Right lobe of liver (tissue), 6 donors: ENCODE measurements at regions of chr6 and their contacts with region 1.

Region 1: GRCh38 chr6:41591859-41592502 is 45.8 kb downstream of the FOXP4 start:
- DNase-seq: peak in 2 of 3 donors; percentile 54 to 73
- ATAC-seq: peak; percentile 79 to 90 (median 86)
- H3K4me3 ChIP-seq: no peak overlapping the region
- H3K27ac ChIP-seq: no peak overlapping the region
- H3K4me1 ChIP-seq: no peaks in the 10 kb centered on the region
- H3K27me3 ChIP-seq: no peaks in the 10 kb centered on the region
- CTCF ChIP-seq: peak; percentile 87 to 91 (median 89)
- POLR2A ChIP-seq: no peak

Region 2: DNA sequence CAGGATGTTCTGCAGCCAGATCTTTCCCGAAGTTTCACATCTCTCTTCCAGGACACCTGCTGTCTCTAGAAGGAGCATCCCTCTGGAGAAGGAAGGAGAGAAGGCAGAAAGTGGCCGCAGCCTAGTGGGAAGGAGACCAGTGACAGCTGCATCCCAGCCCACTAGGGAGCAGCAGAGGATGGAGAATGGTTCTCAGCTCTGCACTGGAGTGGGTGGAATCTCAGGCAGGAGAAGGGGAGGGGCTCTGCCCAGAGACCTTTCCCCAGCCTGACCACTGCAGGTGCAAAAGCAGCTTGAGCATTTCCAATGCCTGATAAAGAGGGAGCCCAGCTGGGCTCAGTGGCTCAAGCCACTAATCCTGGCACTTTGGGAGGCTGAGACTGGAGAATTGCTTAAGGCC is 224.3 kb before region 1 on chr6:
- intact Hi-C with region 1: loop called in 1 of 2 experiments (anchors 5 kb)
- DNase-seq: no peak
- ATAC-seq: peak; percentile 61 to 75 (median 68)
- H3K4me3 ChIP-seq: no peak overlapping the region
- H3K27ac ChIP-seq: no peak overlapping the region
- H3K4me1 ChIP-seq: peaks cover 0 to 12% (median 0%) of the 10 kb centered on the region in 4 donors
- H3K27me3 ChIP-seq: peaks cover 0 to 18% of the 10 kb centered on the region in 2 donors
- CTCF ChIP-seq: peak; percentile 43 to 54 (median 51)
- POLR2A ChIP-seq: no peak

Region 3: DNA sequence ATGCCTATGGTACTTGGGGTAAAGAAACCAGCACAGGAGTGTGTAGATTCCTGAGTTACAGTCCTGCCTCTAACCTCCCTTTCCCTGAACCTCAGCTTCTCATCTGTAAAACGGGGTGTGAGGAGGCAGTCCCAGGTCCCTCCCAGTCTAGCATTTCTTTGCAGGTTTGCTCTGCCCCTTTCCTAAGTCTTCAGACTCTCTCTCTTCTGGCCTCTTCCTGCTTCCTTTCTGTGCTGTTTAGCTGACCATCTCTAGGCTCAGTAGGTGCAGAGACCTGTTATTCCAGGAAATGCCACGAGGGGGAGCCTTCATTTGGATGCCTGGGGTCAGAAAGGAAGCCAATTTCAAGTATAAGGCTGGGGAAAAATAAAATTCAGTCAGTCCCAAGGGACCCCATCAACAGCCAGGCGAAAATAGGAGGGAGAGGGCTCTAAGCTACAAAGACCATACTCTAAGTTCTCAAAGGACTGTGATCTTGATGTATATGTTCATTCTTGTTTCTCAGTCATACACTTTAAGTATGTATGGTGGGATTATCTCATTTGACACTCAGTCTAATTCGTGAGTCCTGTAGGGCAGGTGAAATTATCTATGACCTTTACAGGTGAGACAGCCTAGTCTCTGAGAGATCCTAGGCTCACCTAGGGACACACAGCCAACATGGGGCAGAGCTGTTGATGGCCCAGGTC is 167.5 kb before region 1 on chr6:
- intact Hi-C with region 1: loop called in 1 of 2 experiments (anchors 10 kb)
- DNase-seq: peak; percentile 65 to 82 (median 68)
- ATAC-seq: peak; percentile 69 to 84 (median 77)
- H3K4me3 ChIP-seq: no peak overlapping the region
- H3K27ac ChIP-seq: no peak overlapping the region
- H3K4me1 ChIP-seq: peaks cover 0 to 11% (median 0%) of the 10 kb centered on the region in 4 donors
- H3K27me3 ChIP-seq: no peaks in the 10 kb centered on the region
- CTCF ChIP-seq: peak; percentile 78 to 83 (median 81)
- POLR2A ChIP-seq: no peak

Region 4: DNA sequence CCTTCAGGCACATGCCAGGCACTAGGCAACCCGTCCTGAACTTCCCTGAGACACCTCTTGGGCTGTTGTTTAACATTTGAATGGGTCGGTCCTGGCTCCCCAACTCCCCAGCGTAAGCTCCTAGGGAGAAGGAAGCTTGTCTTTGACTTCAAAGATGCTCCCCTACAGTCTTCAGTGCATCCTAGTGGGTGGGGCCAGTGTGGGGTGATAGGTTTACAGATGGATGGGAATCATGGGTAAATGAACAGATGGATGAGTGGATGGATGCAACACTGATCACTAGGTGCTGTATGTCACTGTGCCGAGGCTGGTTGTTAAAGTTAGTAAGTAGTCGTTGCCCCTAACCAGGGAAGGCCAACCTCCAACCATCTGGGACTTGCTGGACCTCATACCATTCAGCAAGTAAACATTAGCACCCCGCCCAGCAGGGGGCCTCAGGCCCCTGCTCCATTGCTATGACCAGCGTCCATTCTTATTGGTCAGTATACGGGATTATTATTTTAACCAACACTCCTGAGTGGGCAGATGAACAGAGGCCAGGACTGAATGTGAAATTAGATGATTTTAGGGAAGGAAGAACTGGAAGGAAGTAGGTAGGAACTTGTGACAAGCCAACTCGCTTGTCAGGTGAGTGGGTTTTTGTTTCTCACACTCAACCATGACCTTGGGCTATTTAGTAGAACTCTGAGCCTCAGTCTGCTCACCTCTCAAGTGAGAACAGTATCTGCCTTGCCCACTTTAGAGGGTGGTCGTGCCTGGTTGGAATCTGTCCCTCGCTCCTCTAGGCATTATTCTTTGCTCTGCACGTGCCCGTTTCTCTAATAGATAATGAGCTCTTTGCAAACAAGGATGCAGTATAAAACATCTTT is 128.7 kb before region 1 on chr6:
- intact Hi-C with region 1: loop called (anchors 5 kb)
- DNase-seq: peak; percentile 70 to 76 (median 74)
- ATAC-seq: peak; percentile 91 to 98 (median 94)
- H3K4me3 ChIP-seq: no peak overlapping the region
- H3K27ac ChIP-seq: no peak overlapping the region
- H3K4me1 ChIP-seq: no peaks in the 10 kb centered on the region
- H3K27me3 ChIP-seq: no peaks in the 10 kb centered on the region
- CTCF ChIP-seq: peak; percentile 66 to 76 (median 70)
- POLR2A ChIP-seq: no peak

Region 5: GRCh38 chr6:41920921-41921711 is 329.1 kb after region 1 on chr6 and contains the starts of genes BYSL and MED20:
- intact Hi-C with region 1: no loop called
- DNase-seq: peak; percentile 92 to 96 (median 94)
- ATAC-seq: peak; percentile 97 to 98 (median 97)
- H3K4me3 ChIP-seq: peak within 1 kb of the TSS; percentile 73 to 93 (median 85)
- H3K27ac ChIP-seq: peak within 1 kb of the TSS; percentile 87 to 98 (median 95)
- H3K4me1 ChIP-seq: peaks cover 0 to 29% (median 6%) of the 10 kb centered on the region in 4 donors
- H3K27me3 ChIP-seq: no peaks in the 10 kb centered on the region
- CTCF ChIP-seq: peak; percentile 97 to 99 (median 98)
- POLR2A ChIP-seq: peak; percentile 40
- total RNA-seq, gene BYSL: 3.7 to 10.8 (median 8.4) TPM
- total RNA-seq, gene MED20: 7.2 to 10.8 (median 7.7) TPM